GM12878 (cell line): ENCODE measurements at regions of chr7 and their contacts with region 1.

Region 1: GRCh38 chr7:122637784-122638183 is 61.1 kb downstream of the RNF133 start:
- DNase-seq: no peak
- ATAC-seq: peak; percentile 59
- H3K4me3 ChIP-seq: no peak overlapping the region
- H3K27ac ChIP-seq: no peak overlapping the region
- H3K4me1 ChIP-seq: no peaks in the 10 kb centered on the region
- H3K27me3 ChIP-seq: no peaks in the 10 kb centered on the region
- CTCF ChIP-seq: no peak
- EP300 ChIP-seq: no peak
- POLR2A ChIP-seq: no peak
- RAD21 ChIP-seq: no peak

Region 2: GRCh38 chr7:121385800-121386179 is 1252.0 kb before region 1 on chr7:
- CTCF ChIA-PET with region 1: no interaction called
- POLR2A ChIA-PET with region 1: no interaction called
- RAD21 ChIA-PET with region 1: no interaction called
- SMC1A ChIA-PET with region 1: no interaction called
- in situ Hi-C with region 1: no loop called
- intact Hi-C with region 1: loop called (anchors 10 kb)
- DNase-seq: peak; percentile 76
- ATAC-seq: peak; percentile 79
- H3K4me3 ChIP-seq: no peak overlapping the region
- H3K27ac ChIP-seq: peak overlapping the region; percentile 92
- H3K4me1 ChIP-seq: peaks cover 43% of the 10 kb centered on the region
- H3K27me3 ChIP-seq: no peaks in the 10 kb centered on the region
- CTCF ChIP-seq: no peak
- EP300 ChIP-seq: peak; percentile 87 to 94; a peak in 3 of 4 replicates
- POLR2A ChIP-seq: no peak
- RAD21 ChIP-seq: no peak

Region 3: DNA sequence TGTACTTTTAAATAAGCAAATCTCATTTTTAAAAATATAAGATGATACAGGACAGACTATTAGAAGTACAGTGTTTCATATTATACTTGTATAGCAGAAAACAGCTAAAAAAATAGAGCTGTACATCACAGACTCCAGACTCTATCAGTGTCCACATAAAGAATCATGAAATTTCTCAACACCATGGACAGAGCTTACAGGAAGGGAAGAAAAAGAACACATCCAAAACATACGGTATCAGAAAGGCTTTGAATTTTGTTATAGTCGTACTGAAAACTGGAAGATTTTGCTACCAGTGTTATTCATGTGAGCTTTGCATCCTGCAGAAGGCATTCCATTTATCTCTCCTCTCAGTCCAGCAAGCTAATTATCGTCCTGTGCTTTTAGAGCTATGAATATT is 948.0 kb before region 1 on chr7:
- CTCF ChIA-PET with region 1: no interaction called
- POLR2A ChIA-PET with region 1: no interaction called
- RAD21 ChIA-PET with region 1: no interaction called
- SMC1A ChIA-PET with region 1: no interaction called
- in situ Hi-C with region 1: no loop called
- intact Hi-C with region 1: no loop called
- DNase-seq: no peak
- ATAC-seq: no peak
- H3K4me3 ChIP-seq: no peak overlapping the region
- H3K27ac ChIP-seq: no peak overlapping the region
- H3K4me1 ChIP-seq: no peaks in the 10 kb centered on the region
- H3K27me3 ChIP-seq: no peaks in the 10 kb centered on the region
- CTCF ChIP-seq: no peak
- EP300 ChIP-seq: no peak
- POLR2A ChIP-seq: no peak
- RAD21 ChIP-seq: no peak

Region 4: DNA sequence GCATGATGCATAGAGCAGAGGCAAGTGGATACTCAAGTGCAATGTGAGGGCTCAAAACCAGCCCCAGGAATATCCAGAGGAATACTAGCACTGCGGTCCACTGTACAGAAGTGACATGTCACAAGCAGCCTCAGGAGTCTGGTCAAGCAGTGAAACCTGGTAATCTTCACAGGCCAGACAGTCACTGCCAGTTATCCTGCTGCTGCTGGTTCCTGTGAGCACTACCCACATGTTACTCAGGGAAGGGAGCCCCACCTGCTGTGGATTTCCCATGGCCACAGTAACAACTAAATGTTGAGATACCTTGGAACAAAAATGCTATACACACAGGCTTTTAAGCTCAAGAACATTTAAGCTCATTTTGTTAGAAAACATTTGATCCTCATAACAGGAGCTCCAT is 41.9 kb before region 1 on chr7:
- CTCF ChIA-PET with region 1: interaction called, 4 read pairs
- POLR2A ChIA-PET with region 1: interaction called, 6 read pairs
- RAD21 ChIA-PET with region 1: interaction called, 3 read pairs
- SMC1A ChIA-PET with region 1: interaction called, 14 read pairs
- in situ Hi-C with region 1: no loop called
- intact Hi-C with region 1: no loop called
- DNase-seq: no peak
- ATAC-seq: no peak
- H3K4me3 ChIP-seq: no peak overlapping the region
- H3K27ac ChIP-seq: no peak overlapping the region
- H3K4me1 ChIP-seq: no peaks in the 10 kb centered on the region
- H3K27me3 ChIP-seq: no peaks in the 10 kb centered on the region
- CTCF ChIP-seq: no peak
- EP300 ChIP-seq: no peak
- POLR2A ChIP-seq: no peak
- RAD21 ChIP-seq: no peak

Region 5: DNA sequence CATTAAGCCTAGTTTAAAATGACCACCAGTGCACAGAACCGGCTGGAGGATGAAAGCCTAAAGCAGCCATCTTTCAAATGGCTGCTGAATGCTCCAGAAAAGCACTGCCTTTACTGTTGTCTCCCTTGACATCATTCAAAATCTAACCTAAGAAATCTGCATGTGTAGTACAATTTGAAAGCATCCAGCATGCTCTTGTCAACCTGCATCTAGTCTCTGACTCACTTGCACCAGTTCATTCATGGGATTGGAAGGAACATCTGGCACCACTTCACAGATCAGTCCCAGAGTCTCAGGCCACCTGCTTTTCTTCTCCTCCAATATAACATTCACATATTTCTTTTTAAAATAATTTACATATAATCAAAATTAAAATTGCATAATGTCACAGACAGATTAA is 15.1 kb before region 1 on chr7:
- CTCF ChIA-PET with region 1: interaction called, 16 read pairs
- POLR2A ChIA-PET with region 1: interaction called, 10 read pairs
- RAD21 ChIA-PET with region 1: interaction called, 22 read pairs
- SMC1A ChIA-PET with region 1: interaction called, 31 read pairs
- in situ Hi-C with region 1: no loop called
- intact Hi-C with region 1: no loop called
- DNase-seq: no peak
- ATAC-seq: no peak
- H3K4me3 ChIP-seq: no peak overlapping the region
- H3K27ac ChIP-seq: no peak overlapping the region
- H3K4me1 ChIP-seq: no peaks in the 10 kb centered on the region
- H3K27me3 ChIP-seq: no peaks in the 10 kb centered on the region
- CTCF ChIP-seq: no peak
- EP300 ChIP-seq: no peak
- POLR2A ChIP-seq: no peak
- RAD21 ChIP-seq: no peak

Region 6: DNA sequence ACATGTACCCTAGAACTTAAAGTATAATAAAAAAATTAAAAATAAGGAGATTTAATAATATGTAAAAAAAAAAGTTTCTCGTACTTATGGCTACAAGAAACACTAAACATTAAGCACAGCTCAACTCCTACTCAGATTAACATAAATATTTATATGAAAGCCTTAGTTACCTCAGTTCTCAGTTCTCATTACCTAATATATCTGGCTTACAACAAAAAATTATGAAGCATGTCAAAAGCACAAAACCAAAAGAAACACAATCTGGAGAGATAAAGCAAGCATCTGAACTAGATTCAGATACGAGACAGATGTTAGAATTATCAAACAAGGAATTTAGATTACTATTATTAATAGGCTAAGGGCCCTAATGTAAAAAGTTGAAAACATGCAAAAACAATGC is 21.1 kb after region 1 on chr7:
- CTCF ChIA-PET with region 1: interaction called, 14 read pairs
- POLR2A ChIA-PET with region 1: interaction called, 9 read pairs
- RAD21 ChIA-PET with region 1: interaction called, 36 read pairs
- SMC1A ChIA-PET with region 1: interaction called, 28 read pairs
- in situ Hi-C with region 1: no loop called
- intact Hi-C with region 1: no loop called
- DNase-seq: no peak
- ATAC-seq: no peak
- H3K4me3 ChIP-seq: no peak overlapping the region
- H3K27ac ChIP-seq: no peak overlapping the region
- H3K4me1 ChIP-seq: no peaks in the 10 kb centered on the region
- H3K27me3 ChIP-seq: no peaks in the 10 kb centered on the region
- CTCF ChIP-seq: no peak
- EP300 ChIP-seq: no peak
- POLR2A ChIP-seq: no peak
- RAD21 ChIP-seq: no peak

Region 7: GRCh38 chr7:122702872-122703510 is 65.2 kb after region 1 on chr7 and contains the start of gene RNF148:
- CTCF ChIA-PET with region 1: no interaction called
- POLR2A ChIA-PET with region 1: no interaction called
- RAD21 ChIA-PET with region 1: no interaction called
- SMC1A ChIA-PET with region 1: no interaction called
- in situ Hi-C with region 1: no loop called
- intact Hi-C with region 1: no loop called
- DNase-seq: no peak
- ATAC-seq: no peak
- H3K4me3 ChIP-seq: no peak within 1 kb of the TSS
- H3K27ac ChIP-seq: no peak within 1 kb of the TSS
- H3K4me1 ChIP-seq: no peaks in the 10 kb centered on the region
- H3K27me3 ChIP-seq: no peaks in the 10 kb centered on the region
- CTCF ChIP-seq: no peak
- EP300 ChIP-seq: no peak
- POLR2A ChIP-seq: no peak
- RAD21 ChIP-seq: no peak
- polyA plus RNA-seq, gene RNF148: not detected

Region 8: DNA sequence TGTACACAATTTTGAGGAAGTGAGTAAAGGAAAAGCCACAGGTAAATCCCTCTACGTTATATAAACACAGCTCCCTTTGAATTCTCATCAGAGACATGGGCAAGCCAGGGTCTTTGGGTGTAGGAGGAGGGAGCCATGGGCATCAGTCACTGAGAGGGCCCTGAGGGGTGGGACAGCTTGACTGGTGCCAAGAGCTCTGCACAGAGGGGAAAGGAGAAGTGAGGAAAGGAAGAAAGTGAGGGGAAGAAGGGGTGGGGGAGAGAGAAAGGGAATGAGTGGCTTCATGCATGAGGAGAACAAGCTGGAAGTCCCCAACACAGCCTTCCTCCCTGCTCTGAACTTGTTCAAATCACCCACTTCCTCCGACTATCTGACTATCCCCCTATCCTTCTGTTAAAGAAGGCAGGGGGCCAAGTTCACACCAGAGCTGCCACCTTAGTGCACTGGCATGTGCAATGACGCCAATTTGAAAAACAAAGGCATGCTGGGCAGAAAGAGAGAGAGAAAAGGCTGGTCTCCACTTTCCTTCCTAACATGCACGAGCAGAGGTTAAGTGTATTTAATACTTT is 81.3 kb after region 1 on chr7:
- CTCF ChIA-PET with region 1: no interaction called
- POLR2A ChIA-PET with region 1: no interaction called
- RAD21 ChIA-PET with region 1: interaction called, 20 read pairs
- SMC1A ChIA-PET with region 1: interaction called, 5 read pairs
- in situ Hi-C with region 1: no loop called
- intact Hi-C with region 1: loop called (anchors 5 kb)
- DNase-seq: no peak
- ATAC-seq: peak; percentile 61
- H3K4me3 ChIP-seq: no peak overlapping the region
- H3K27ac ChIP-seq: no peak overlapping the region
- H3K4me1 ChIP-seq: no peaks in the 10 kb centered on the region
- H3K27me3 ChIP-seq: no peaks in the 10 kb centered on the region
- CTCF ChIP-seq: no peak
- EP300 ChIP-seq: no peak
- POLR2A ChIP-seq: no peak
- RAD21 ChIP-seq: no peak